B cell (primary cell): ENCODE measurements at regions of chr3 and their contacts with region 1.

Region 1: GRCh38 chr3:195411836-195412235 is 31.0 kb downstream of the ACAP2 start:
- DNase-seq: no peak
- ATAC-seq: no peak
- H3K4me3 ChIP-seq: no peak overlapping the region
- H3K4me3 Mint-ChIP-seq: no peak overlapping the region
- H3K27ac ChIP-seq: peak overlapping the region in 1 of 2 donors; percentile 38
- H3K27ac Mint-ChIP-seq: no peak overlapping the region
- H3K4me1 ChIP-seq: peaks cover 0 to 25% of the 10 kb centered on the region in 2 donors
- H3K4me1 Mint-ChIP-seq: peaks cover 62% of the 10 kb centered on the region
- H3K27me3 ChIP-seq: no peaks in the 10 kb centered on the region
- H3K27me3 Mint-ChIP-seq: no peaks in the 10 kb centered on the region
- CTCF ChIP-seq: no peak

Region 2: GRCh38 chr3:195394024-195394423 is 17.8 kb before region 1 on chr3:
- CTCF ChIA-PET with region 1: interaction called, 5 read pairs
- POLR2A ChIA-PET with region 1: no interaction called
- intact Hi-C with region 1: loop called (anchors 2 kb)
- DNase-seq: peak; percentile 37
- ATAC-seq: peak; percentile 71
- H3K4me3 ChIP-seq: peak overlapping the region in 1 of 5 experiments; percentile 27
- H3K4me3 Mint-ChIP-seq: peak overlapping the region; percentile 65
- H3K27ac ChIP-seq: peak overlapping the region; percentile 18 to 68
- H3K27ac Mint-ChIP-seq: peak overlapping the region; percentile 69
- H3K4me1 ChIP-seq: peaks cover 26 to 41% of the 10 kb centered on the region in 2 donors
- H3K4me1 Mint-ChIP-seq: peaks cover 48% of the 10 kb centered on the region
- H3K27me3 ChIP-seq: no peaks in the 10 kb centered on the region
- H3K27me3 Mint-ChIP-seq: no peaks in the 10 kb centered on the region
- CTCF ChIP-seq: no peak